Activated naive CD4-positive, alpha-beta T cell treated with anti-CD3 and anti-CD28 coated beads for 36 hours (primary cell): ENCODE measurements at regions of chr14 and their contacts with region 1.

Region 1: DNA sequence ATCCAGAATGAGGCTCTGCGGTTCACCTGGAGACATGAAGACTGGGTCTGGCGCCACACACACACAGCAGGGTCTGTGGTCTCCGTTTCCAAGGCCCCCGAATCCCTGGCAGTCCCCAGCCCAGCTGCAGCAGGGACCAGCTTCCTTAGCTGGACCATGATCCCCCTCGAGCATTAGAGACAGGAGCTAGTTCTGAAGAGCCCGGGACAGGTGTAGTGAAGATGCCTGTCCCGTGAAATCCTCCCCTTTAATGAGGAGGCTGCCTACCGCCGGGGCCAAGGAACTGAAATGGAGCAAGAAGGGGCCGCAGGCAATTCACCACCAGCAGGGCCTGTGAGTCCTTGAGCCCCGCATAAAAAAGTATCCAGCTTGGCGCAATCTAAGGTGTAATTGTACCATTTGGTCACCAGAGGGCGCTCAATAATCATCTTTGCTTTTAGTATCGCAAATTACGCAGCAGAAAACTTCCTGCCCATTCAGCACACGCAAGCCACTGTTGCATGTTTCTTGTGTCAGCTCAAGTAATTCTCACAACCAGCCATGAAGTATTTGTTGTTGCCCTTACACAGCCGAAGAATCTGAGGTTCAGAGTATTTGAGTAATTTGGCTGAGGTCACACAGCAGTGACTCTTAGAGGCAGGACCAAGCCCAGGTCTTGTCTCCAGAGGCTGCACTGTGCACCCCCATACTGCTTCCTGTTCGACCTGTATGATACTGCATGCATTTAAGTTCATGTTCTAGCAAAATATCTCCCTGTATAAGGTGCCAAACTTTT is 54.3 kb upstream of the PPP2R5C start:
- DNase-seq: peak; percentile 76
- H3K4me3 Mint-ChIP-seq: peak overlapping the region; percentile 49
- H3K27ac Mint-ChIP-seq: peak overlapping the region; percentile 78
- H3K4me1 Mint-ChIP-seq: peaks cover 27% of the 10 kb centered on the region
- H3K27me3 Mint-ChIP-seq: no peaks in the 10 kb centered on the region

Region 2: DNA sequence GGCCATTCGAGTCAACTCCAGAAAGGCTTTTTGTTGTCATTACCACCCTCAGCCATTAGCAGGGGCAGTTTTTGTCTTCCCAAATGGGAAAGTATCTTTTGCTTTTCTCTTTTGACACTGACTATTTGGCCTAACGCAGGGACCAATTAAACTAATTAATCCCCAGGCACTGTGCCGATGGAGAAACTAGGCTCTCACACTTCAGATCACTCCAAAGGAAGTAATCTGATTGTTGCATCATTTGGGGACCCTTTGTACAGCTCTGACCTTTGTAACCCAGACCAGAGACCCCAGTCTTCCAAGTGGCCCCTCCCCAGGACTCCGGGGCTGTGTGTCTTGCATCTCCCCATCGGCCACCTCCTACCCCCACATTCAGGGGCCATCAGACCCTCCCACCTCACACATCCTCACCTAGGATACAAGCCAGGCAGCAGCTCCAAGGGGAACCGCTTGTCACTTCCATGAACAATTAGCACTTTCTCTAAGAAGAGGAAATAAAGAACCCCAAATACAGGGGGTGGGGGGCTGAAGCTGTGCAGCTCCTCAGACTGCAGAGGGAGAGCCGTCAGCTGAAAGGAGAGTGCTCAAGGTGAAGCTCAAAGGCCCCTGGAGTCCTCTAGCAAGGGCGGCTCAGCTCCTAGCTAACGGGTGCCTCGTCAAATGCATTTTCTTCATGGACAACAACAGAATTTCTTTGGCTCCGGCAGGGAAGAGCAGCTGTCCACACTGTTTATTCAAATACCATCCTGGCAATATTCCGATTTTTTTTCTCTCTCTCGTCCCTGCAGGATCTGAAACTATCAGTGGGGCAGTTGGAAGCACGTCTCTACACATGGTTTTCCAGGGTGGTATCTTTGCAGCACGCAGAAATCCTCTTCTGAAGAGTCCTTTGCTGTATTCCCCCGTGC is 210.2 kb before region 1 on chr14:
- CTCF ChIA-PET with region 1: no interaction called
- intact Hi-C with region 1: no loop called
- DNase-seq: peak; percentile 2
- H3K4me3 Mint-ChIP-seq: no peak overlapping the region
- H3K27ac Mint-ChIP-seq: no peak overlapping the region
- H3K4me1 Mint-ChIP-seq: no peaks in the 10 kb centered on the region
- H3K27me3 Mint-ChIP-seq: peaks cover 27% of the 10 kb centered on the region

Region 3: GRCh38 chr14:101721951-101722661 is 14.9 kb after region 1 on chr14:
- CTCF ChIA-PET with region 1: interaction called, 13 read pairs
- intact Hi-C with region 1: loop called (anchors 1 kb)
- DNase-seq: peak; percentile 88
- H3K4me3 Mint-ChIP-seq: peak overlapping the region; percentile 73
- H3K27ac Mint-ChIP-seq: peak overlapping the region; percentile 94
- H3K4me1 Mint-ChIP-seq: peaks cover 35% of the 10 kb centered on the region
- H3K27me3 Mint-ChIP-seq: no peaks in the 10 kb centered on the region

Region 4: DNA sequence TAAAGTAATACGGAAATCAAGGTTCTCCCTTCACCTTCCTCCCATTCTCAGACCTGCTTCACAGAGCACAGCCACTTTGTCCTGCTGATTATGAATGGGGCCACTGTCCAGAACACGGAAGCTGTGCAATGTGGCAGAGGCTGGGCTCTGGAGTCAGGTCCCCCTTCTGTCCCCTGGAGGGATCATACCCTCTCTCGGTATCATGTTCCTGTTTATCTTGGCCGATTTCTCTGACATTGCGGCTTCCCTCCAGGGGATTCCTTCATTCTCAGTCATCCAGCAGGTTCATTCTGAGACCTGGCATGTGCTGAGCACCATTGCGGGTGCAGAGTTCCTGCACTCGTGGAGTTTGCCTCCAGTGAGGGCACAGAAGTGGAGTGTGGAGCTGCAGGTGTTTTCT is 65.6 kb after region 1 on chr14:
- CTCF ChIA-PET with region 1: interaction called, 23 read pairs
- intact Hi-C with region 1: no loop called
- DNase-seq: no peak
- H3K4me3 Mint-ChIP-seq: no peak overlapping the region
- H3K27ac Mint-ChIP-seq: no peak overlapping the region
- H3K4me1 Mint-ChIP-seq: peaks cover 13% of the 10 kb centered on the region
- H3K27me3 Mint-ChIP-seq: no peaks in the 10 kb centered on the region

Region 5: GRCh38 chr14:101843665-101844064 is 136.4 kb after region 1 on chr14:
- CTCF ChIA-PET with region 1: interaction called, 9 read pairs
- intact Hi-C with region 1: loop called (anchors 1 kb)
- DNase-seq: peak; percentile 80
- H3K4me3 Mint-ChIP-seq: no peak overlapping the region
- H3K27ac Mint-ChIP-seq: peak overlapping the region; percentile 74
- H3K4me1 Mint-ChIP-seq: peaks cover 88% of the 10 kb centered on the region
- H3K27me3 Mint-ChIP-seq: no peaks in the 10 kb centered on the region

Region 6: DNA sequence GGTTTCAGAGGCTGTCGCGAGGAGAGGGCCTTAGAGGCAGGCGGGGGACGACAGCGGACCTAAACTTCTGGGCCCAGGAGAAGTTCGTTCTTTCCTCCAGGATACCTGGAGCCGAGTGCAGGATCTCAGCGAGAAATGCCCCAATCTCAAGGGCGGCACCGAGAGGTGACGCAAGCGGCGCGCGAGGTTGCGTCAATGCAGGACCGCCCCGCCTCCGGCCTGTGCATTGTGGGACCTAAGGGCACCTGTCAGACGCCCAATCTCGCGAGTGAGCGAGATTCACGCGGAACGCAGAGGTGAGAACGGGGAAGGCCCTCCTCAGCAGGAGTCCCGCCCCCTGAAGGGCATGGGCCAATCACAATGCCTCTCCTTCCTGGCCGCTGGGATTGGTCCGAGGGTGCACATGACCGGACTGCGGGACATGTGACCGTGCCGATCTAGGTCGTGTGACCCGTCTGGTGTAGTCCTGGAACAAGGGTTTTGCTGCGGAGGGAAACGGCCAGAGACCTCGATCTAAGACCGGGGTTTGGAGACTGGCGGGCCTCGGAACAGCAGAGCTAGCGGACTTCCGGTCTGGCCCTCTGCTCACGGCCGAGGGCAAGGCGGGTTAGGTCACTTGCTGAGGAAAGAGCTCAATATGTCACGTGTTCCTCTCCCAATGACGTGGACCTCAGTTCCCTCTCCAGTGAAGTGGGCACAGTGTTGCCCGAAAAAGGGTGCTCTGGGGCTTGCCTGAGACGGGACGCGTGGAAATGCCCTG is 240.8 kb after region 1 on chr14:
- CTCF ChIA-PET with region 1: interaction called, 5 read pairs
- intact Hi-C with region 1: loop called (anchors 1 kb)
- DNase-seq: peak; percentile 100
- H3K4me3 Mint-ChIP-seq: peak overlapping the region; percentile 98
- H3K27ac Mint-ChIP-seq: peak overlapping the region; percentile 97
- H3K4me1 Mint-ChIP-seq: peaks cover 18% of the 10 kb centered on the region
- H3K27me3 Mint-ChIP-seq: peaks cover 20% of the 10 kb centered on the region

Region 7: GRCh38 chr14:102063091-102063802 is 356.0 kb after region 1 on chr14:
- CTCF ChIA-PET with region 1: no interaction called
- intact Hi-C with region 1: loop called (anchors 1 kb)
- DNase-seq: peak; percentile 71
- H3K4me3 Mint-ChIP-seq: no peak overlapping the region
- H3K27ac Mint-ChIP-seq: no peak overlapping the region
- H3K4me1 Mint-ChIP-seq: no peaks in the 10 kb centered on the region
- H3K27me3 Mint-ChIP-seq: no peaks in the 10 kb centered on the region